Activated naive CD4-positive, alpha-beta T cell treated with anti-CD3 and anti-CD28 coated beads for 36 hours (primary cell): ENCODE measurements at regions of chr1 and their contacts with region 1.

Region 1: GRCh38 chr1:192936313-192937018 is 122.7 kb downstream of the UCHL5 start:
- DNase-seq: peak; percentile 20
- H3K4me3 Mint-ChIP-seq: no peak overlapping the region
- H3K27ac Mint-ChIP-seq: peak overlapping the region; percentile 32
- H3K4me1 Mint-ChIP-seq: peaks cover 12% of the 10 kb centered on the region
- H3K27me3 Mint-ChIP-seq: no peaks in the 10 kb centered on the region

Region 2: GRCh38 chr1:192539297-192540092 is 397.0 kb before region 1 on chr1:
- CTCF ChIA-PET with region 1: no interaction called
- intact Hi-C with region 1: loop called (anchors 1 kb)
- DNase-seq: no peak
- H3K4me3 Mint-ChIP-seq: no peak overlapping the region
- H3K27ac Mint-ChIP-seq: peak overlapping the region; percentile 51
- H3K4me1 Mint-ChIP-seq: peaks cover 28% of the 10 kb centered on the region
- H3K27me3 Mint-ChIP-seq: no peaks in the 10 kb centered on the region

Region 3: GRCh38 chr1:192904438-192904895 is 32.0 kb before region 1 on chr1:
- CTCF ChIA-PET with region 1: no interaction called
- intact Hi-C with region 1: loop called (anchors 1 kb)
- DNase-seq: peak; percentile 56
- H3K4me3 Mint-ChIP-seq: no peak overlapping the region
- H3K27ac Mint-ChIP-seq: no peak overlapping the region
- H3K4me1 Mint-ChIP-seq: peaks cover 2% of the 10 kb centered on the region
- H3K27me3 Mint-ChIP-seq: no peaks in the 10 kb centered on the region

Region 4: DNA sequence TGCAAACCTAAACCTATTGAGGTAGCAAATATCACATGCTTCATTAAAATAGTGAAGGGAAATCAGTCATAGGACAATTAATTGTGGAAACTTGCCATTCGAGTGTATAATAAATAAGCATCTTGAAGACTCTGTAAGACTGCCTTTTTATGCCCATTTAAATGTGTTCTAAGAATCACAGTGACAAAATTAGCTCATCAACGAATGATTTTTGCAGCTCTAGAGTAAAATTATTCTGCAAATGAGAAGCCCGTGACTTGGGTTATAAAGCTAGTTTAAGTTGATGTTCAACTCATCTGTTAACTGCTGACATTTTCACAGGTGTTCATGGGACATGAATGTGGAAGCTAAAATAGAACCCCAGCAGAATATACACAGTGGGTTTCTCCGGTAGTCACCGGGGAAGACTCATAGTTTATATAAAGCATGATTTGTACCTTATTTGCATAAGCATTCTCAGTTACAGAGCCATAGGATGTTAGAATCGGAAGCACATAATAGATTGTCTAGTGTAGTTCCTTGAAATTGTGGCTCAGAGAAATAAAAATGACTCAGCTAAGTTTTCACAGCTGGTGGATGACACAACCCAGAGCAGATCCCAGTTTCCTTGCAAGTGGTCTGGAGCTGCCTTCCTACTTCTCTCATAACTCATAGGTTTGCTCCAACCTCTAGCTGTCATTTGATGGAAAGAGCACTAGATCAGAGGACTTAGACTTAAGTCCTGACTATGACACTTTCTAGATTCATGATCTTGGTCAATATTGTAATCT is 15.4 kb after region 1 on chr1:
- CTCF ChIA-PET with region 1: no interaction called
- intact Hi-C with region 1: loop called (anchors 1 kb)
- DNase-seq: no peak
- H3K4me3 Mint-ChIP-seq: no peak overlapping the region
- H3K27ac Mint-ChIP-seq: no peak overlapping the region
- H3K4me1 Mint-ChIP-seq: no peaks in the 10 kb centered on the region
- H3K27me3 Mint-ChIP-seq: no peaks in the 10 kb centered on the region

Region 5: DNA sequence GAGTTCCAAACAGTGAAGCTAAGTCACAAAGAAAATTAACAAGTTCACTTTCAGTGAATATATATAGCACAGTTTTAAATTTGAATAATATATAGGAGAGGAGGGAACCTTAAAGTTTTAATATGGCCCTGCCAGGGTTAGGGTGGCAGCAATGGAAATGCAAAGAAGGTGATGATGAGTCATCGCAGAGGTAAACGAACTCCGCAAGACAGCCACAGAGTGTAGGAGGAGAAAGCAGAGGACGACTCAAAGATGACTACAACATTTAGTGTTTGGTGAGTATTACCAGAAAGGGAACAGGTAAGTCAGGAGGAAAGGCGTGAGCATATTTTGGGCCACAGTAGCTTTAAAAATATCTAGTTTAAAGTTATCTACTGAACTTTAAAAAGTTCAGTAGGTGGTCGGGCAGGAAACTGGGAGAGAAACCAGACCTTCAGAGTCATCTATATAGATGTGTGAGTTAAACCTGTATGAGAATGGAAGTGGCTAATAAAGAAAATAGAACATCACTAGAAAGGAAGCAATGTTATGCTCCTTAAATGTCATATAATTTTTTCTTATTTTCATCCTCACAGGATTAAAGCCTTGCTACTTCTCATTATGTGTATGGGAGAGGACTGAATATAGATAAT is 47.0 kb after region 1 on chr1:
- CTCF ChIA-PET with region 1: no interaction called
- intact Hi-C with region 1: loop called (anchors 1 kb)
- DNase-seq: peak; percentile 58
- H3K4me3 Mint-ChIP-seq: no peak overlapping the region
- H3K27ac Mint-ChIP-seq: peak overlapping the region; percentile 67
- H3K4me1 Mint-ChIP-seq: peaks cover 25% of the 10 kb centered on the region
- H3K27me3 Mint-ChIP-seq: no peaks in the 10 kb centered on the region

Region 6: GRCh38 chr1:193094112-193094511 is 157.6 kb after region 1 on chr1:
- CTCF ChIA-PET with region 1: no interaction called
- intact Hi-C with region 1: no loop called
- DNase-seq: no peak
- H3K4me3 Mint-ChIP-seq: no peak overlapping the region
- H3K27ac Mint-ChIP-seq: no peak overlapping the region
- H3K4me1 Mint-ChIP-seq: no peaks in the 10 kb centered on the region
- H3K27me3 Mint-ChIP-seq: no peaks in the 10 kb centered on the region

Region 7: DNA sequence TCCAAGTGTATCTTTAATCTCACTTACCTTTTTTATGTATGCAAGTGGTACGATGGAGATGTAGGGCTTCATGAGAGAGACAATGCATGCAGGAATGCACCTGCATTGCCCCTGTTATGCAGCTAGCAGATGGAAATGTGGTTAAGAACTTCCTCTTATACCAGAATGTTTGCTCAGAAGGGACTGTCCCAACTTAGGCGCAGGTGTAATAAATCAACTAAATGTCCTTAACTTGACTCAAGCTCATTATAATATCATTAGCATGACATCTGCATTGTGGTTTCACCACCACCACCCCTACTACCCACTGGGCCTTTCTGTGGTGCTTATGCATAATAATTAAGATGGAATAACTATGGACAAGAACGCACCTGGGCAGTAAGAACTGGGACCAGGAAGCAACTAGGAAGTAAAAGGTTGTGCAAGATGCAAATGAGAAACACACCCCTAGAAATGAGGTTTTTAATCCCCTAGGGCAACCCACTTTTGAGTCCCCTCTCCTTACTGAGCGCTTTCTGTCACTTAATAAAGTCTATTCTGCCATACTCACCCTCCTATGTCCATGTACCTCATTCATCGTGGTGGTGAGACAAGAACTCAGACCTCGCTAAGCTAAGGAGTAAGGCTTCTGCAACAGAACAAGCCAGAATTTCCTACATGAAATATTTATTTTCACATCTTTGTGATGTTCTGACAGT is 1353.3 kb after region 1 on chr1:
- CTCF ChIA-PET with region 1: no interaction called
- intact Hi-C with region 1: loop called (anchors 5 kb)
- DNase-seq: peak; percentile 81
- H3K4me3 Mint-ChIP-seq: peak overlapping the region; percentile 54
- H3K27ac Mint-ChIP-seq: peak overlapping the region; percentile 59
- H3K4me1 Mint-ChIP-seq: peaks cover 25% of the 10 kb centered on the region
- H3K27me3 Mint-ChIP-seq: no peaks in the 10 kb centered on the region